ENCODE measurements at regions of chr6 and their contacts with region 1.

Region 1: GRCh38 chr6:27146706-27147505 is 100.6 kb upstream of the PRSS16 start:
- DNase-seq: peak; percentile 85
- ATAC-seq: peak; percentile 72
- H3K4me3 Mint-ChIP-seq: no peak overlapping the region
- H3K27ac Mint-ChIP-seq: no peak overlapping the region
- H3K4me1 Mint-ChIP-seq: peaks cover 13% of the 10 kb centered on the region
- H3K27me3 Mint-ChIP-seq: no peaks in the 10 kb centered on the region
- CTCF ChIP-seq: no peak

Region 2: DNA sequence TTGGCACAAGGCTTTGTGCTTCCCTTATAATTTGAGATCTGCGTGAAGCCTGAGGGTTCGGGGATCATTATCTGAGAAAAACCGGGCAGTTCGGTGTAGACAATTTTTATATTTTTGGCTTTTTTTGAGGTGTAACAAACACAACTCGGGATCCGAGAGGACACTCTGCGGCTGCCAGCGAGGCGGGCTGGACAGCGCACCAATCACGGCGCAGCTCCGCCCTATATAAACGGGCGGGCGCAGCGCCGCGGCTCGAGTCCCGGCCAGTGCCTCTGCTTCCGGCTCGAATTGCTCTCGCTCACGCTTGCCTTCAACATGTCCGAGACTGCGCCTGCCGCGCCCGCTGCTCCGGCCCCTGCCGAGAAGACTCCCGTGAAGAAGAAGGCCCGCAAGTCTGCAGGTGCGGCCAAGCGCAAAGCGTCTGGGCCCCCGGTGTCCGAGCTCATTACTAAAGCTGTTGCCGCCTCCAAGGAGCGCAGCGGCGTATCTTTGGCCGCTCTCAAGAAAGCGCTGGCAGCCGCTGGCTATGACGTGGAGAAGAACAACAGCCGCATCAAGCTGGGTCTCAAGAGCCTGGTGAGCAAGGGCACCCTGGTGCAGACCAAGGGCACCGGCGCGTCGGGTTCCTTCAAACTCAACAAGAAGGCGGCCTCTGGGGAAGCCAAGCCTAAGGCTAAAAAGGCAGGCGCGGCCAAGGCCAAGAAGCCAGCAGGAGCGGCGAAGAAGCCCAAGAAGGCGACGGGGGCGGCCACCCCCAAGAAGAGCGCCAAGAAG is 990.6 kb before region 1 on chr6:
- CTCF ChIA-PET with region 1: no interaction called
- POLR2A ChIA-PET with region 1: interaction called, 37 read pairs
- intact Hi-C with region 1: no loop called
- DNase-seq: peak; percentile 87
- ATAC-seq: peak; percentile 41
- H3K4me3 Mint-ChIP-seq: peak overlapping the region; percentile 88
- H3K27ac Mint-ChIP-seq: peak overlapping the region; percentile 93
- H3K4me1 Mint-ChIP-seq: peaks cover 36% of the 10 kb centered on the region
- H3K27me3 Mint-ChIP-seq: peaks cover 14% of the 10 kb centered on the region
- CTCF ChIP-seq: no peak

Region 3: GRCh38 chr6:26234421-26235296 is 912.2 kb before region 1 on chr6:
- CTCF ChIA-PET with region 1: no interaction called
- POLR2A ChIA-PET with region 1: interaction called, 25 read pairs
- intact Hi-C with region 1: no loop called
- DNase-seq: peak; percentile 86
- ATAC-seq: peak; percentile 65
- H3K4me3 Mint-ChIP-seq: peak overlapping the region; percentile 75
- H3K27ac Mint-ChIP-seq: peak overlapping the region; percentile 99
- H3K4me1 Mint-ChIP-seq: peaks cover 24% of the 10 kb centered on the region
- H3K27me3 Mint-ChIP-seq: peaks cover 5% of the 10 kb centered on the region
- CTCF ChIP-seq: no peak

Region 4: DNA sequence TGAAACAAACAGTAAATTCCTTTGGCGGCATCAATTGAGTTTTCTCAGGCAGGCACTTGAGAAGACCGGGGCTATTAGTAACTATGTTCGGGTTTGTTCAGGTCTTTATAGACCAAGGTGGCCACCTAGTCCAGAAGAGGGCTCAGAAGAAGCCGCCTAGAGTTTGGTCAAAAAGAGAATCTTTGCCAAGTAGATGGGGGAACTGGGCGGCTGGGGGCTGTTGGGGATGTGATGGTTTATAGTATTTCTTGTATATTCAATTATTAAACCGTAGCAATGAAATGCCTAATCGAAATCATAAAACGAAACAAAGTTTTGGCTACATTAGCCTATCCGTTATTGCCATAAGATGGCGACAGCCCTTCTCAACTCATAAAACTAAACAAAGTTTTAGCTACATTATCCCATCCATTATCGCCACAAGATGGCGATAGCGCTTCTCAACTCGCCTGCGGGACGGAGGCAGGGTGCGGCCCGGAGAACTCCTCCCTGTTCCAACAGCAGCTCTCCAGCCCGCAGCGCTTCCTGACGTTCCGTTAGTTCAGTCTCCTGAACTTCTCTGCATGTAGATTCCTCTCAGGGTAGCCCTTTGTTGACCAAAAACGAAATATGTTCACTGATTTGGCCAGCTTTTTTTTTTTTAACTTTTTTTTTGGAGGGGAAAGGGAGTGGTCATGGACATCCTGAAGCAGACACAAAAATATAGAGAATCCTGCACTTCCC is 19.9 kb before region 1 on chr6:
- CTCF ChIA-PET with region 1: interaction called, 15 read pairs
- POLR2A ChIA-PET with region 1: interaction called, 692 read pairs
- intact Hi-C with region 1: loop called (anchors 2 kb)
- DNase-seq: peak; percentile 91
- ATAC-seq: peak; percentile 75
- H3K4me3 Mint-ChIP-seq: peak overlapping the region; percentile 74
- H3K27ac Mint-ChIP-seq: peak overlapping the region; percentile 79
- H3K4me1 Mint-ChIP-seq: peaks cover 20% of the 10 kb centered on the region
- H3K27me3 Mint-ChIP-seq: no peaks in the 10 kb centered on the region
- CTCF ChIP-seq: peak; percentile 78

Region 5: GRCh38 chr6:27816906-27817305 is 670.0 kb after region 1 on chr6:
- CTCF ChIA-PET with region 1: no interaction called
- POLR2A ChIA-PET with region 1: interaction called, 233 read pairs
- intact Hi-C with region 1: loop called (anchors 5 kb)
- DNase-seq: no peak
- ATAC-seq: no peak
- H3K4me3 Mint-ChIP-seq: no peak overlapping the region
- H3K27ac Mint-ChIP-seq: no peak overlapping the region
- H3K4me1 Mint-ChIP-seq: peaks cover 32% of the 10 kb centered on the region
- H3K27me3 Mint-ChIP-seq: no peaks in the 10 kb centered on the region
- CTCF ChIP-seq: no peak

Region 6: DNA sequence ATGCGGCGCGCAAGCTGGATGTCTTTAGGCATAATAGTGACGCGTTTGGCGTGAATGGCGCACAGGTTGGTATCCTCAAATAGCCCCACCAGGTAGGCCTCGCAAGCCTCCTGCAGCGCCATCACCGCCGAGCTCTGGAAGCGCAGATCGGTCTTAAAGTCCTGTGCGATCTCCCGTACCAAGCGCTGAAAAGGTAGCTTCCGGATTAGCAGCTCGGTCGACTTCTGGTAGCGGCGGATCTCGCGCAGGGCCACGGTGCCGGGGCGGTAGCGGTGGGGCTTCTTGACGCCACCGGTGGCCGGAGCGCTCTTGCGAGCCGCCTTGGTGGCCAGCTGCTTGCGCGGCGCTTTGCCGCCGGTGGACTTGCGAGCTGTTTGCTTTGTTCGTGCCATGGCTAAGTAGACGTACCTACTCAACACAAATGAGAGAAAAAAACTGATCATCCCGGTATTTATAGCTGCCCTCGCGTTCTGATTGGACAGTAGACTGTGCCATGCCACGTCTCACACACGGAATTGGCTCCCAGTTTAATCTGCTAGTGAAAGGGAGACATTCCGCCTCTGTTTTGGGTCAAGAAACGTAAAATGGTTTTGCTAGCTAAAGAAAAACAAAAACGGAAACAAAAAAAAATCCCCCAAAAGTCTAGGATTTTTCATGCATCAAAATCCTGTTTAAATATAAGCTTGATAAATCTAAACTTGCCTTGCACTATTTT is 725.2 kb after region 1 on chr6:
- CTCF ChIA-PET with region 1: no interaction called
- POLR2A ChIA-PET with region 1: interaction called, 85 read pairs
- intact Hi-C with region 1: no loop called
- DNase-seq: peak; percentile 85
- ATAC-seq: peak; percentile 61
- H3K4me3 Mint-ChIP-seq: peak overlapping the region; percentile 93
- H3K27ac Mint-ChIP-seq: peak overlapping the region; percentile 99
- H3K4me1 Mint-ChIP-seq: peaks cover 26% of the 10 kb centered on the region
- H3K27me3 Mint-ChIP-seq: no peaks in the 10 kb centered on the region
- CTCF ChIP-seq: peak; percentile 27

Measured in activated CD8-positive, alpha-beta T cell treated with anti-CD3 and anti-CD28 coated beads for 36 hours (primary cell).